CD14-positive monocyte (primary cell): ENCODE measurements at regions of chr18 and their contacts with region 1.

Region 1: GRCh38 chr18:2540575-2540974 is 30.7 kb downstream of the METTL4 start:
- DNase-seq: no peak
- H3K4me3 ChIP-seq: no peak overlapping the region
- H3K4me3 Mint-ChIP-seq: no peak overlapping the region
- H3K27ac ChIP-seq: no peak overlapping the region
- H3K27ac Mint-ChIP-seq: no peak overlapping the region
- H3K4me1 ChIP-seq: no peaks in the 10 kb centered on the region
- H3K4me1 Mint-ChIP-seq: no peaks in the 10 kb centered on the region
- H3K27me3 ChIP-seq: no peaks in the 10 kb centered on the region
- H3K27me3 Mint-ChIP-seq: no peaks in the 10 kb centered on the region
- CTCF ChIP-seq: no peak

Region 2: DNA sequence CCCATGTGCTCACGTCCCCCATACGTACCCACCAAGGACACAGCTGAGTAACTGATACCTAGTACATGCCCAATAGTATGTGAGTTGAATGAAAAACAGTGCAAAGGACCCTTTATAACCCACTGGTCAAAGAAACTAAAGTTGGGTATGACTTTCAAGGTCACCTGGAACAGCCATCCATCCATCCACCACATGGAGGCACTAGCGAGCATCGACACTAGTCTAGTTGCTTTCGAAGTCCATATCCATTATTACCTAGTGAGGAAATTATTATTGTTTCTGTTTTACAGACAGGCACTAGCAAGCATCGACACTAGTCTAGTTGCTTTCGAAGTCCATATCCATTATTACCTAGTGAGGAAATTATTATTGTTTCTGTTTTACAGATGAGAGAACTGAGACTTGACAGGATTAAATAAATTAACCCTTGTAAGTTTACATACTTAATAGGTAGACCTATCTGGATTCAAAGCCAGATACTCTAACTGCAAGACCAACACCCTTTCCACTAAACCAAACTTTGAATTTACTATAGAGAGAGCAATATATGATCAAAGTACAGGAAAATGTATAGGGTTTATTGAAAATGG is 202.9 kb before region 1 on chr18:
- intact Hi-C with region 1: loop called in 1 of 2 experiments (anchors 5 kb)
- DNase-seq: peak; percentile 5 to 23 (median 16)
- H3K4me3 ChIP-seq: no peak overlapping the region
- H3K4me3 Mint-ChIP-seq: no peak overlapping the region
- H3K27ac ChIP-seq: no peak overlapping the region
- H3K27ac Mint-ChIP-seq: no peak overlapping the region
- H3K4me1 ChIP-seq: no peaks in the 10 kb centered on the region
- H3K4me1 Mint-ChIP-seq: no peaks in the 10 kb centered on the region
- H3K27me3 ChIP-seq: peaks cover 0 to 5% of the 10 kb centered on the region in 2 donors
- H3K27me3 Mint-ChIP-seq: peaks cover 2 to 17% (median 4%) of the 10 kb centered on the region in 3 donors
- CTCF ChIP-seq: peak; percentile 82

Region 3: DNA sequence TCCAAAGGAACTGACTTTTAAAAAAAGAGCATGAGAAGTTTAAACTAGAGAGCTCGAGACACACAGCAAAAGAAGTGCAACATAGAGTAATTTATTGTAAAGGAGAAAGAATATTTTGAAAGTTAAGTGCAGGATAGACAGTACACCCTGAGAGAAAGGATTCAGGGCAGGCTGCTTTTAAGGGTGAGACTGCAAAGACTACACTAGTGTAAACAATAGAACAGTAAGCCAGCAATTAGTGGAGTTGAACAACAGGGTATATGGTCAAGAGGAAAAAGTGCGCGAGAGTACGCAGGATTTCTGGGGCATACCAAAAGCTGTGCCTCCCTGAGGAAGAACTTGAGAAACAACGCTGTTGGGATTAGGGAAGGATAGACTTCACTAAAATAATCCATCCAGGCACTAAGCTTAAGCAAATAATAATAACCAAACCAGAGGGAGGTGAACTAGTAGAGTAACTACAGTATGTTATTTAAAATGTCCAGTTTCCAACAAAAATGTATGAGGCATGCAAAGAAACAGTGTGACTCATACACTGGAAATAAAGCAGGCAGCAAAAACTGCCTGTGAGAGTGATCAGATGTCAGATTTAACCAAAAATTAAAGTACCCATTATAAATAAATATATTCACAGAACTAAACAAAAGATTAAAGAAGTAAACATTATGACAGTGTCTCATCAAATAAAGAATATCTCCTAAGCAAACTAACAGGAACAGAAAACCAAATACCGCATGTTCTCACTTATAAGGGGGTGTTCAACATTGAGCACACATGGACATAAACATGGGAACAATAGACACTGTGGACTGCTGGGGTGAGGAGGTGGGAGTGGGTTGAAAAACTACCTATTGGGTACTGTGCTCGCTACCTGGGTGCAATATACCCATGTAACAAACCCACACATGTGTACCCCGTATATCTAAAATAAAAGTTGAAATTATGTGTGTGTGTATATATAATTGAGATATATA is 265.7 kb after region 1 on chr18:
- intact Hi-C with region 1: no loop called
- DNase-seq: no peak
- H3K4me3 ChIP-seq: no peak overlapping the region
- H3K4me3 Mint-ChIP-seq: no peak overlapping the region
- H3K27ac ChIP-seq: peak overlapping the region in 1 of 2 donors; percentile 3
- H3K27ac Mint-ChIP-seq: peak overlapping the region in 2 of 7 donors; percentile 10 to 77
- H3K4me1 ChIP-seq: no peaks in the 10 kb centered on the region
- H3K4me1 Mint-ChIP-seq: no peaks in the 10 kb centered on the region
- H3K27me3 ChIP-seq: no peaks in the 10 kb centered on the region
- H3K27me3 Mint-ChIP-seq: no peaks in the 10 kb centered on the region
- CTCF ChIP-seq: no peak